Breast epithelium (tissue), 4 donors: ENCODE measurements at regions of chr7 and their contacts with region 1.

Region 1: DNA sequence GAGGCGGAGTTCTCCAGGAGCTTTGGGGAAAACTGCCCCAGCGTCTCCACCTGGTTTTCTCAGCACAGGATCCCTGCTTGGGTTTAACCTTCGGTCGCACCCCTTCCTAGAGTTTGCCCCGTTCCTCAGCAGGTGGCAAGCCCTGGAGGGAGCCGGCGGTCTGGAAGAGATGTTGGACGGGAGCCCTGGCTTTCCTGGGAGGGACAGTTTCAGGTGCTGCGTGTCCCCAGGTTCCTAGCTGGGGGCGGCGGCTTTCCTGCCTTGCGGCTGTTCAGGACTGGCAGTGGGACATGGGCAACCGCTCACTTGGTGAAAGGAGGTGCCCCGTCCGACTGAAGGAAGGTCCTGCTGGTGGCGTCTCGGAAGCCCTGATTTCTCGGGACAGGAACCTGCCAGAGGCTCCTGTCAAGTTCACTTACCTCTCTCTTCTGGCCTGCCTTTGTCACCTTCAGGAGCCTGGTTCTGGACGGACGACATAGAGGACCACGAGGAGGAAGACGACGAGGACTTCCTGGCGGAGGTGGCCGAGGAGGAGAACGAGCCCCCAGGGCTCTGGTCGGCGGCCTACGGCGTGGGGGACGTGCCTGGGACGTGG is 14.8 kb downstream of the ZNF316 start:
- DNase-seq: peak in 1 of 2 donors; percentile 50
- H3K4me3 ChIP-seq: no peak overlapping the region
- H3K27ac ChIP-seq: no peak overlapping the region
- H3K4me1 ChIP-seq: no peaks in the 10 kb centered on the region
- H3K27me3 ChIP-seq: no peaks in the 10 kb centered on the region
- CTCF ChIP-seq: no peak
- POLR2A ChIP-seq: no peak

Region 2: GRCh38 chr7:6613721-6614120 is 38.2 kb before region 1 on chr7:
- intact Hi-C with region 1: loop called (anchors 2 kb)
- DNase-seq: no peak
- H3K4me3 ChIP-seq: no peak overlapping the region
- H3K27ac ChIP-seq: no peak overlapping the region
- H3K4me1 ChIP-seq: no peaks in the 10 kb centered on the region
- H3K27me3 ChIP-seq: no peaks in the 10 kb centered on the region
- CTCF ChIP-seq: no peak
- POLR2A ChIP-seq: no peak